ENCODE measurements at regions of chr1 and their contacts with region 1.

Region 1: DNA sequence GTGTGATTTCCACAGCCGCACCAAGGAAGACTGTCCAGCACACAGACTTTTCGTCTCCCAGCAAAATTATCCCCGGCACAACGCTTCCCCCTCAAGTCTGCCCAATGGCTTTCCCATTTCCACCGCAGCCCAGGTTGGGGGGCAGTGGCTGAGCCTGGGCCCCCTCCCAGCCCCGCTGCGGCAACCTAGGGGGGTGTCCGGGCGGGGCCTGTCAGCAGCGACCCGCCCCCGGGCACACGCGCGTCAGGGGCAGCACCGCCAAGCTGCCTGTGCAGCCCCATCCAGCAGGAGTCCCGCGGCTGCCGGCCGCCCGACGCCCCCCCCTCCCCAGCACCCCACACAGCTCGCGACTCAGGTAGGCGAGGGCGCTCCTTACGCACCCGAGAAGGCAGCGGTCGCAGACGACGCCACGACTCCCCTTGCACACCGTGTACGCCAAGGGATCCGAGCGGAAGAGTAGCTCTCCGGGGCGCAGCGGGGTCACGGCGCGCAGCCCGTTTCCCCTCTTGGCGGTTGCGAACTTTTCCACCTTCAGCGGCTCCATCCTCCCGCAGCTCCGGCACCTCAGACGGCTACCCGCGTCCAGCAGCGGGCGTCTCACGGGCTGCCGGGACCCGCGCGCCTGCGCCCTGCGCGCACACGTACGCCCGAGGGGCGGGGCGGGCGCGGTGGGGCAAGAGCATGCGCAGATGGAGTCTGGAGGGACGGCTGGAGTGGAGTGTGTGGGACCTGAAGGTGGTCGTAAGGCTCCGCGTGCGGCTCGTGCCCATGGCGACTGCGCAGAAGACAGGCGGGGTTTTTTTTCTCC is at the start of gene SMYD3:
- DNase-seq: peak; percentile 78 to 96
- H3K4me3 ChIP-seq: peak within 1 kb of the TSS; percentile 83 to 100 (median 96)
- H3K27ac ChIP-seq: peak within 1 kb of the TSS; percentile 61 to 80 (median 75)
- H3K4me1 ChIP-seq: peaks cover 5 to 22% (median 16%) of the 10 kb centered on the region in 4 donors
- H3K27me3 ChIP-seq: no peaks in the 10 kb centered on the region
- CTCF ChIP-seq: no peak
- EP300 ChIP-seq: no peak
- POLR2A ChIP-seq: no peak
- total RNA-seq, gene SMYD3: 6.4 to 196 (median 34.7) TPM

Region 2: DNA sequence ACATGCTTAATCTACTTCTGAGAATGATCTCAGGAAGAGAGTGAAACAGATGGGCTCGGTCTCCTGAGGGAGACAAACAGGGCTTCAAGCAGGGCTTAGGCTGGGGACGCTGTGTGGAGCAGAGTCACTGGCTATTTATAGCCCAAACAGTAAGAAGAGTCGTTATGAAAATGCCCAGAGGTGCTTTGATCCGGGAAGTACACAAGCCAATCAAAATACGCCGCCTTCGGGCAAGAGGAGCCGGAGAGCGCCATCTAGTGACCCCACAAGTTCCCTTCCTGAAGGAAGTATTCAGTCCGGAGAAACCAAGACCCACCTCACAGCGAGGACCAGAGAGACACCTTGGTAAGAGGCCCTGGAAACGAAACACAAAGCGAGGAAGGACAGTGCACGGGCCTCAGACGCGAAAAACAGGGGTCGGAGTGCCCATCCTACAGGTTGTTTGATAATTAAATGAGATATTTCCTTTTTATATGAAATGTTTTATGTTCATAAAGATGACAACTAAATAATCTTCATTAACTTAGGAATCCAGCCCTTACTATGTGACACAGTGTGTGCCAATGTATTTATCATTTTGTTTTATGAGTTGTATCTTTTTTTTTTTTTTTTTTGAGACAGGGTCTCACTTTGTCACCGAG is 192.3 kb after region 1 on chr1:
- intact Hi-C with region 1: loop called (anchors 10 kb)
- DNase-seq: peak; percentile 93 to 95
- H3K4me3 ChIP-seq: peak overlapping the region; percentile 29 to 34 (median 32)
- H3K27ac ChIP-seq: peak overlapping the region in 3 of 5 donors; percentile 58 to 66 (median 63)
- H3K4me1 ChIP-seq: peaks cover 5 to 28% (median 20%) of the 10 kb centered on the region in 4 donors
- H3K27me3 ChIP-seq: no peaks in the 10 kb centered on the region
- CTCF ChIP-seq: peak in 5 of 7 experiments; percentile 34 to 86 (median 78)
- EP300 ChIP-seq: no peak
- POLR2A ChIP-seq: no peak

Measured in stomach (tissue), 19 donors.